ENCODE measurements at regions of chr14 and their contacts with region 1.

Region 1: DNA sequence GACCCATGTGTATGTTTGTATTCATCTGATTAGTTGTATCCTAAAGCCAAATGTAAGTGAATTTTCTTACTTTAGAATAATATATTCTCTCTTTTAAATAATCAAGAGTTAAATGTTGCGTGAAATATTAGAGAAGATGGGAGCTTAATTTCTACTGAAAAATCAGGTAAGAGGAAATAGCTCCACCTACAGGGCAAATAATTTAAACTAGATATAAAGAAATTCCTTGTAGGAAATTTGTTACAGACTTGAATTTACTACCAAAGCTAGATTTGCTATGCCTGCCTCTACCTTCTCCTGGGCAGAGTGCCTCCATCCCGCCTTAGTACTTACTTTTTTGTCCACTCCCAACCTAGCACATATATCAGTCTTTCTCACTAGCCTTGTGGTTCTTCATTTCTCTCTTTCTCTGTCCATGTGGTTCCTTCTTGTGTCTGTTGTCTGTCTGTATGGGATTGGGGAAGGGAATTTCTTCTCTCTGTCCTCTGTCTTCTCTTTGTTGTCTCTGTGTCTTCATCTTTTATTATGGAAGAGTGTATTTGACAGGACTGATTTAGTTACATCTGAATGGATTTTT is 44.7 kb downstream of the PALS1 start:
- DNase-seq: peak; percentile 39
- ATAC-seq: no peak
- H3K4me3 ChIP-seq: no peak overlapping the region
- H3K27ac ChIP-seq: no peak overlapping the region
- H3K4me1 ChIP-seq: no peaks in the 10 kb centered on the region
- H3K27me3 ChIP-seq: no peaks in the 10 kb centered on the region
- CTCF ChIP-seq: peak; percentile 23 to 56 (median 55); a peak in 4 of 6 replicates
- POLR2A ChIP-seq: no peak
- RAD21 ChIP-seq: peak; percentile 70

Region 2: GRCh38 chr14:66974397-66975025 is 311.5 kb before region 1 on chr14:
- CTCF ChIA-PET with region 1: no interaction called
- POLR2A ChIA-PET with region 1: no interaction called
- RAD21 ChIA-PET with region 1: no interaction called
- intact Hi-C with region 1: no loop called
- DNase-seq: no peak
- ATAC-seq: no peak
- H3K4me3 ChIP-seq: no peak overlapping the region
- H3K27ac ChIP-seq: no peak overlapping the region
- H3K4me1 ChIP-seq: no peaks in the 10 kb centered on the region
- H3K27me3 ChIP-seq: no peaks in the 10 kb centered on the region
- CTCF ChIP-seq: no peak
- POLR2A ChIP-seq: no peak
- RAD21 ChIP-seq: no peak

Region 3: GRCh38 chr14:67187210-67187609 is 98.8 kb before region 1 on chr14:
- CTCF ChIA-PET with region 1: interaction called, 12 read pairs
- POLR2A ChIA-PET with region 1: no interaction called
- RAD21 ChIA-PET with region 1: interaction called in 1 of 2 experiments, 3 read pairs
- intact Hi-C with region 1: no loop called
- DNase-seq: peak; percentile 83
- ATAC-seq: peak; percentile 87
- H3K4me3 ChIP-seq: peak overlapping the region in 1 of 2 experiments; percentile 49; a peak in 2 of 4 replicates
- H3K27ac ChIP-seq: peak overlapping the region; percentile 39
- H3K4me1 ChIP-seq: peaks cover 28 to 38% of the 10 kb centered on the region in 2 experiments
- H3K27me3 ChIP-seq: no peaks in the 10 kb centered on the region
- CTCF ChIP-seq: no peak
- POLR2A ChIP-seq: no peak
- RAD21 ChIP-seq: peak; percentile 6; the same call in 1 of the 2 replicates

Region 4: GRCh38 chr14:67680121-67680602 is 394.2 kb after region 1 on chr14:
- CTCF ChIA-PET with region 1: no interaction called
- POLR2A ChIA-PET with region 1: no interaction called
- RAD21 ChIA-PET with region 1: no interaction called
- intact Hi-C with region 1: no loop called
- DNase-seq: no peak
- ATAC-seq: no peak
- H3K4me3 ChIP-seq: no peak overlapping the region
- H3K27ac ChIP-seq: no peak overlapping the region
- H3K4me1 ChIP-seq: peaks cover 0 to 5% of the 10 kb centered on the region in 2 experiments; a peak in 2 of 4 replicates
- H3K27me3 ChIP-seq: no peaks in the 10 kb centered on the region
- CTCF ChIP-seq: no peak
- POLR2A ChIP-seq: no peak
- RAD21 ChIP-seq: no peak

Measured in HCT116 (cell line).